Left ventricle myocardium inferior (tissue), 1 donor: ENCODE measurements at regions of chr17 and their contacts with region 1.

Region 1: DNA sequence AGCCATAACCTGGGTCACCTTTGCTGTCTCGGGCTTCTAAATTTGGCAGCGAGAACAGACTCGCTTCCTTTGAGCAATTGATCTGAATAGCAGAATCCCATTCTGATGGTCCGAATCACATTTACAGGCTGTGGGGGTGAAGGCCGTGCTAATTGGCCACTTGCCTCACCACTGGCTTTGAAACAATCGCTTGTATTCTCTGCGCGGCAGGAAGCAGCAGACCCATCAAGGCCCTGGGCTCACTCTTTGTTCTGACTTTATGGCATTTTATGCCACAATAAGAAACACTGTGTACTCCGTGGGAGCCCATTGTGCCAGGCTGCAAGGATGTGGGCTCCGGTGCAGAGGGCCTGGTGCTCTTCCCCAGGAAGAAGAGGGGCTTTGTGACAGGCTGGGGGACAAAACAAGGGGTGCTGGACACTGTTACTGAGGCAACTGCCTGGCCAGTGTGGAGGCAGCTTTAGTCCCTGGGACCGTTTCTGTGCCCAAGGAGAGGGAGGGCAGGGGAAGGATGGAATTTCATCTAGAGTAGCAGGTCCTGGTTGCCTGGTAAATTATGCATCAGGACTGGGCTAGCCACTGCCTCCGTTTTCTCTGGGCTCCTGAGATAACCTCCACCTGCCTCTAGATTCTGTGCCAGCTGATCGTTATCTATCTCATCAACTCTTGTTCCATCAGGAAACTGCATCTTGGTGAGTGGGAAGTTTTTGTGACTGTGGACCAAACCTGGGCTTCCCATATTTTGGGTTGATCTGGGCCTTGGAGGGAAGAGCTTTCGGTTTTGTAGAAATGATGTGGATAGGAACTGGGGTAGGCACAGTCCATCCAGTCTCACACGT is 78.5 kb downstream of the MRC2 start:
- DNase-seq: no peak
- H3K4me3 ChIP-seq: peak overlapping the region; percentile 78
- H3K27ac ChIP-seq: peak overlapping the region; percentile 90
- H3K4me1 ChIP-seq: peaks cover 37% of the 10 kb centered on the region
- H3K27me3 ChIP-seq: peaks cover 31% of the 10 kb centered on the region
- CTCF ChIP-seq: no peak

Region 2: GRCh38 chr17:62968445-62968923 is 262.5 kb after region 1 on chr17:
- intact Hi-C with region 1: loop called (anchors 5 kb)
- DNase-seq: no peak
- H3K4me3 ChIP-seq: no peak overlapping the region
- H3K27ac ChIP-seq: no peak overlapping the region
- H3K4me1 ChIP-seq: peaks cover 27% of the 10 kb centered on the region
- H3K27me3 ChIP-seq: no peaks in the 10 kb centered on the region
- CTCF ChIP-seq: peak; percentile 84